ENCODE measurements at regions of chr17 and their contacts with region 1.

Region 1: DNA sequence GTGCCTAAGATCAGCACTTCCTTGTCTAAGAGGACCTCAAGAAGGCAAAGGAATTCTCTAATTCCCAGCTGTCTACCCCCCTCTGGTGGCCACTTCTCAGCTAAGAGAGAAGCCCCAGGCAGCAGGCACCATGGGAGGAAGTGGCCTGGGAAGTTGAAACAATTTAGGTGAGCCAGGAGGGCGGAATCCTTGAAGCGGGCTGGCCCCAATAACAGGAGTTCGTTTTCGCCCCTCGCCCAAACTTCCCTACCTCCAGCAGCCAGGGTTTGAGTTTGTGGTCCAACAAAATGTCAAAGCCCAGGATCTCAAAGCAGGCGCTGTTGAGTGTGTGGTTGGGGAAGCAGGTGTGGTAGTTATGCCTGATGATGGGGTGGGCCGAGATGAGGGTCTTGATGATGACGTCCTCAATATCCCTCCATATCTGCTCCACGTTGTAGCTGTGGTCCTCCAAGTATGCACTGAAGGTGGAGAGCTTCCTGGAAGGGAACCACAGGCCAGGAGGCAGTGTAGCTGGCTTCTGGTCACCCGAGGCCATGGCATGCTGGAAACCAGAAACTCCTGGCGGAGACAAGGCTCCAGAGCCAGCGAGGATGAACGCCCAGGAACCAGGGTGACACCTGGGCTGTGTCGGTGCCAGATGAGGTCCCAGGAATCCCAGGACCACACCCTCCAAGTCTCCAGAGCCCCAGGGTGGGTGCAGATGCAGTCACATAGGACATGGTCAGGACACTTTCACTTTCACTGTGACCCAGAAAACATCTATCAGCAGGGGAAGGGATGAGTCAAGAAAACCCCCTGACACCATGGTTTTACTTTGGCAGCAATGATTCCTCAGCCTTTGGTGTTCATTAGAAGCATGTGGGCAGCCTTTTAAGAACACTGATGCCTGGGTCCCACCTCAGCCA is 25.6 kb downstream of the TTLL6 start:
- DNase-seq: peak in 5 of 10 donors; percentile 19 to 61 (median 39)

Region 2: GRCh38 chr17:48671697-48672171 is 119.6 kb before region 1 on chr17:
- intact Hi-C with region 1: loop called (anchors 5 kb)
- DNase-seq: peak; percentile 56 to 97 (median 84)

Region 3: DNA sequence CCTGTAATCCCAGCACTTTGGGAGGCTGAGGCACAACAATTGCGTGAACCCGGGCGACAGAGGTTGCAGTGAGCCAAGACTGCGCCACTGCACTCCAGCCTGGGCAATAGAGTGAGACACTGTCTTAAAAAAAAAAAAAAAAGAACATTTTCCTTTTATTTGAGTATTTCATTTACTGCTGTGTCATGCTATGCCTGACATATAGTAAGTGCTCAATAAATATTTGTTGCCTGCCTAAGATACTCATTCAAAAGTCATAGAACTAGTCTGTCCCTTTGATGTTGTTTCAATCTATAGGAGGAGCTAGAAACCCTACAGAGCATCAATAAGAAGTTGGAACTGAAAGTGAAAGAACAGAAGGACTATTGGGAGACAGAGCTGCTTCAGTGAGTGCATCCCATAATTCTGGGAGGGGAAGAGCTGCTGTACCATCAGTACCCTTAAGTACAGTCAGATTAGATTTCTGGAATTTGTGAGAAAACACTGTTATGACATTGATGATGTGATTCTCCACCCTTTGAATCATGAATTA is 59.5 kb after region 1 on chr17:
- intact Hi-C with region 1: no loop called
- DNase-seq: no peak

Region 4: GRCh38 chr17:49086649-49087048 is 295.3 kb after region 1 on chr17:
- intact Hi-C with region 1: no loop called
- DNase-seq: no peak